CD8-positive, alpha-beta memory T cell (primary cell): ENCODE measurements at regions of chr10 and their contacts with region 1.

Region 1: DNA sequence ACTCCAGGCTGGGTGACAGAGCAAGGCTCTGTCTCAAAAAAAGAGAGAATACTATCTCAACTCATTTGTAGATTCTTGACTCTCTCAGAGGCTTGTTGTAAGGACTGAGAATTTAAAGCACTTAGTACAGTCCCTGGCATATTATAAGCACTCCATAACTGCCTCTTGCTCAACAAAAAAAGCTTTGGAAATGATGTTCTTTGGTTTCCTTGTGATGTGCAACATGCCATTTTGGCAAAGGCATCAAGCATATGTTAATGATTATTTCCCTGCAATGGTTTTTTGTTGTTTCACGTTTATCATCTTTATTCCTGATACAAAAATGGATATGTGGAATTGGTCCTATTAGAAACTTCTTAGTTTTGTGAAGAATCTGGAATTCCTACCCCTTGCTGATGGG is 15.7 kb downstream of the NOLC1 start:
- DNase-seq: no peak
- H3K4me3 ChIP-seq: no peak overlapping the region
- H3K4me3 Mint-ChIP-seq: no peak overlapping the region
- H3K27ac ChIP-seq: no peak overlapping the region
- H3K27ac Mint-ChIP-seq: no peak overlapping the region
- H3K4me1 ChIP-seq: peaks cover 4% of the 10 kb centered on the region
- H3K4me1 Mint-ChIP-seq: peaks cover 6 to 8% (median 7%) of the 10 kb centered on the region in 3 donors
- H3K27me3 ChIP-seq: no peaks in the 10 kb centered on the region
- H3K27me3 Mint-ChIP-seq: peaks cover 0 to 5% of the 10 kb centered on the region in 2 donors

Region 2: DNA sequence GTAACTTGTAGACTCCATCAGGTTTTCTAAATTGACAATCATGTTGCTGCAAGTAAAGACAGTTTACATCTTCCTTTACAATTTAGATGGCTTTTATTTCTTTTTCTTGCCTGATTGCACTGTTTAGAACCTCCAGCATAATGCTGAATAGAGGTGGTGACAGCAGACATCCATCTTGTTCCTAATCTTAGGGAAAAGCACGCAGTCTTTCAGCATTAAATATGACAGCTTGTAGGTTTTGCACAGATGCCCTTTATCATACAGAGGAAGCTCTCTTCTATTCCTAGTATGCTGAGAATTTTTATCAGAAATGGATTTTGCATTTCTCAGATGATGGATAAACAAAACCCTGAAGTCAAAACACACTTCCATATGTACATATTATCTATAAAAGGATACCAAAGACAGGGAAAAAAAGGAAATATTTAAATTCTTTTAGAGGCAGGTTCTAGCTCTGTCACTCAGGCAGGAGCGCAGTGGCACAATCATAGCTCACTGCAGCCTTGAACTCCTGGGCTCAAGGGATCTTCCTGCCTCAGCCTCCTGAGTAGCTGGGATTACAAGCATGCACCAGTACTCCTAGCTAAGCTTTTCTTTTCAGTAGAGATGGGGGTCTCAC is 255.2 kb before region 1 on chr10:
- CTCF ChIA-PET with region 1: no interaction called
- POLR2A ChIA-PET with region 1: interaction called, 10 read pairs
- DNase-seq: no peak
- H3K4me3 ChIP-seq: no peak overlapping the region
- H3K4me3 Mint-ChIP-seq: no peak overlapping the region
- H3K27ac ChIP-seq: no peak overlapping the region
- H3K27ac Mint-ChIP-seq: no peak overlapping the region
- H3K4me1 ChIP-seq: no peaks in the 10 kb centered on the region
- H3K4me1 Mint-ChIP-seq: no peaks in the 10 kb centered on the region
- H3K27me3 ChIP-seq: no peaks in the 10 kb centered on the region
- H3K27me3 Mint-ChIP-seq: no peaks in the 10 kb centered on the region

Region 3: GRCh38 chr10:102140184-102140583 is 27.7 kb before region 1 on chr10:
- CTCF ChIA-PET with region 1: interaction called, 14 read pairs
- POLR2A ChIA-PET with region 1: no interaction called
- DNase-seq: no peak
- H3K4me3 ChIP-seq: no peak overlapping the region
- H3K4me3 Mint-ChIP-seq: no peak overlapping the region
- H3K27ac ChIP-seq: no peak overlapping the region
- H3K27ac Mint-ChIP-seq: no peak overlapping the region
- H3K4me1 ChIP-seq: peaks cover 10% of the 10 kb centered on the region
- H3K4me1 Mint-ChIP-seq: peaks cover 14 to 22% (median 17%) of the 10 kb centered on the region in 3 donors
- H3K27me3 ChIP-seq: no peaks in the 10 kb centered on the region
- H3K27me3 Mint-ChIP-seq: peaks cover 0 to 2% of the 10 kb centered on the region in 2 donors

Region 4: DNA sequence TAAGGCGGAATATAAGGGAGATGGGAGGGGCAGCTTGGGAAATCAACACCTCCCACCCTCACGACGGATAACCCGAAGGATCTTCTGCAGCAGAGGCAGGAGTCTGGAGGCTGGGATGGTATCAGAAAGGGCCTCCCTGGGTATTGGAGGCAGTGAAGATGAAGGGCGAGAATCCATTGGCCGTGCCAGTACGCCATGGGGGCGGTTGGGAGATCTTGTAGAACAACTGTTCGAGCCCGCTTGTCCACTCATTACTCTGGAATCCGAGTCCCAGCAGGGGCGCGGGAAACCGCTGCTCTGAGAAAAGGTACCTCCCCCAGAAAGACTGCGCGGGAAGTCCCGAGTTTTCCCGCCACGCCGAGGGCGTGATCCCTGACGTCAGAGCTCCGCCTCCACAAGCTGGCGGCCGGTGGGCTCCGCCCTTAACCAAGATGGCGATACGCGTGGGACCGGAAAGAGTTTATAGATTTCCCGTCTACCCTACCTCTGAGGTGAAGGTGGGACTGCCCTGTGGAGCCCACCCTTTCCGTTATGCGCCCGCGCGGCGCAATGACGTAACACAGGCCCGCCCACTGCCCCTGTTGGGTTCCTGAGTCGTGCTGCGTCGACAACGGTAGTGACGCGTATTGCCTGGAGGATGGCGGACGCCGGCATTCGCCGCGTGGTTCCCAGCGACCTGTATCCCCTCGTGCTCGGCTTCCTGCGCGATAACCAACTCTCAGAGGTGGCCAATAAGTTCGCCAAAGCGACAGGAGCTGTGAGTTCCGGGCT is 15.9 kb before region 1 on chr10 and contains the start of gene NOLC1:
- CTCF ChIA-PET with region 1: interaction called, 10 read pairs
- POLR2A ChIA-PET with region 1: interaction called, 3 read pairs
- DNase-seq: peak; percentile 99 to 100 (median 100)
- H3K4me3 ChIP-seq: peak within 1 kb of the TSS; percentile 91
- H3K4me3 Mint-ChIP-seq: peak within 1 kb of the TSS; percentile 88 to 99 (median 95)
- H3K27ac ChIP-seq: peak within 1 kb of the TSS; percentile 93
- H3K27ac Mint-ChIP-seq: peak within 1 kb of the TSS; percentile 93 to 99 (median 98)
- H3K4me1 ChIP-seq: peaks cover 22% of the 10 kb centered on the region
- H3K4me1 Mint-ChIP-seq: peaks cover 33 to 55% (median 49%) of the 10 kb centered on the region in 3 donors
- H3K27me3 ChIP-seq: no peaks in the 10 kb centered on the region
- H3K27me3 Mint-ChIP-seq: no peaks in the 10 kb centered on the region
- total RNA-seq, gene NOLC1: 304 to 330 TPM

Region 5: GRCh38 chr10:102352066-102352715 is 184.3 kb after region 1 on chr10:
- CTCF ChIA-PET with region 1: interaction called, 17 read pairs
- POLR2A ChIA-PET with region 1: no interaction called
- DNase-seq: peak; percentile 51 to 75 (median 59)
- H3K4me3 ChIP-seq: no peak overlapping the region
- H3K4me3 Mint-ChIP-seq: no peak overlapping the region
- H3K27ac ChIP-seq: no peak overlapping the region
- H3K27ac Mint-ChIP-seq: peak overlapping the region in 3 of 8 donors; percentile 23 to 35 (median 24)
- H3K4me1 ChIP-seq: no peaks in the 10 kb centered on the region
- H3K4me1 Mint-ChIP-seq: peaks cover 0 to 5% (median 0%) of the 10 kb centered on the region in 3 donors
- H3K27me3 ChIP-seq: no peaks in the 10 kb centered on the region
- H3K27me3 Mint-ChIP-seq: no peaks in the 10 kb centered on the region

Region 6: DNA sequence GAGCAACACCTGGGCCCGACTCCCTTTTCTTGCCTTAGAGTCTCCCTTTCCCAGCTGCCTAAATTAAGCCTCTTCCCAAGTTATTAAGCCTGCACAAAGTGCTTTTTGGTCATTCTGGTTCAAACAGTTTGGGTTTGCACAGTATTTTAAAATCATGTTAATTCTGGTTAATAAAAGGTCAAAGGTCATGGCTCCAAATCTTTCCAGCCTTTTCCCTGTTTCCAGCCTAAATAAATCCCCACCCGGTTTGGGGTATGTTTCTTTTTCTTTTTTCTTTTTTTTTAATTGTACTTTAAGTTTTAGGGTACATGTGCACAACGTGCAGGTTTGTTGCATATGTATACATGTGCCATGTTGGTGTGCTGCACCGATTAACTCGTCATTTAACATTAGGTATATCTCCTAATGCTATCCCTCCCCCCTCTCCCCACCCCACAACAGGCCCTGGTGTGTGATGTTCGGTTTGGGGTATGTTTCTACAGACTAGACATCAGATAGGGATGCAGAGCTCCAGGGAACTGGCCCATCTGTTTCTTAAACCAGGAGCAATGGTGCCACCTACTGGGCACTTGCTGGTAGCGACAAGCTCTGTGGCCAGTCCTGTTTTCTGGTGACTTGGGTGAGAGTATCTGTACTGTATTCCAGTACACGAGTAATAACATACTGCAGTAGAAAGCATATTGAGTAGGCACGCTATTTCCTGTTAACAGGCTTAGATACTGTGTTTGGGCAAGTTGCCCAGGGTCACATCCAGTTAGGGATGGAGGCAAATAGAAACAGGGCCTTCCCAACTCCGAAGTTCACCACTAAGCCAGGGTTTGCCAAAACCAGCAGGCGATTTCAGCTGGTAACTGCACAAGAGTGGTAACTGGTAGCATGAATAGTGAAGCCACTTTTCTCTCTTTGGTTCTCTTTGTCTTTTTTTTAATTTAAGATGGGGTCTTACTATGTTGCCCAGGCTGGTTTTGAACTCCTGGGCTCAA is 415.9 kb after region 1 on chr10:
- CTCF ChIA-PET with region 1: interaction called, 10 read pairs
- POLR2A ChIA-PET with region 1: no interaction called
- DNase-seq: peak; percentile 64 to 87 (median 66)
- H3K4me3 ChIP-seq: no peak overlapping the region
- H3K4me3 Mint-ChIP-seq: no peak overlapping the region
- H3K27ac ChIP-seq: no peak overlapping the region
- H3K27ac Mint-ChIP-seq: peak overlapping the region in 4 of 8 donors; percentile 50 to 71 (median 58)
- H3K4me1 ChIP-seq: no peaks in the 10 kb centered on the region
- H3K4me1 Mint-ChIP-seq: peaks cover 0 to 12% (median 6%) of the 10 kb centered on the region in 3 donors
- H3K27me3 ChIP-seq: no peaks in the 10 kb centered on the region
- H3K27me3 Mint-ChIP-seq: no peaks in the 10 kb centered on the region